Activated T-helper 1 cell treated with anti-CD3 and anti-CD28 coated beads, Interleukin-12 subunit alpha, Interleukin-12 subunit beta, Interleukin-2, Interleukin-4 antibody, amounts not matched to agents 30 ng/mL and 10 ng/mL and 1 ng/mL, durations not matched to agents 14 hours and 24 hours and 36 hours (primary cell): ENCODE measurements at regions of chr2 and their contacts with region 1.

Region 1: GRCh38 chr2:161136696-161137324 is 23.4 kb upstream of the TANK start:
- DNase-seq: peak; percentile 64
- H3K4me3 Mint-ChIP-seq: peak overlapping the region; percentile 94
- H3K27ac Mint-ChIP-seq: peak overlapping the region; percentile 98
- H3K4me1 Mint-ChIP-seq: peaks cover 52% of the 10 kb centered on the region
- H3K27me3 Mint-ChIP-seq: no peaks in the 10 kb centered on the region

Region 2: GRCh38 chr2:160043265-160043664 is 1093.5 kb before region 1 on chr2:
- intact Hi-C with region 1: loop called (anchors 5 kb)
- DNase-seq: no peak
- H3K4me3 Mint-ChIP-seq: no peak overlapping the region
- H3K27ac Mint-ChIP-seq: no peak overlapping the region
- H3K4me1 Mint-ChIP-seq: peaks cover 8% of the 10 kb centered on the region
- H3K27me3 Mint-ChIP-seq: peaks cover 9% of the 10 kb centered on the region

Region 3: GRCh38 chr2:161104054-161104553 is 32.7 kb before region 1 on chr2:
- intact Hi-C with region 1: loop called (anchors 1 kb)
- DNase-seq: no peak
- H3K4me3 Mint-ChIP-seq: peak overlapping the region; percentile 46
- H3K27ac Mint-ChIP-seq: peak overlapping the region; percentile 66
- H3K4me1 Mint-ChIP-seq: peaks cover 40% of the 10 kb centered on the region
- H3K27me3 Mint-ChIP-seq: no peaks in the 10 kb centered on the region

Region 4: DNA sequence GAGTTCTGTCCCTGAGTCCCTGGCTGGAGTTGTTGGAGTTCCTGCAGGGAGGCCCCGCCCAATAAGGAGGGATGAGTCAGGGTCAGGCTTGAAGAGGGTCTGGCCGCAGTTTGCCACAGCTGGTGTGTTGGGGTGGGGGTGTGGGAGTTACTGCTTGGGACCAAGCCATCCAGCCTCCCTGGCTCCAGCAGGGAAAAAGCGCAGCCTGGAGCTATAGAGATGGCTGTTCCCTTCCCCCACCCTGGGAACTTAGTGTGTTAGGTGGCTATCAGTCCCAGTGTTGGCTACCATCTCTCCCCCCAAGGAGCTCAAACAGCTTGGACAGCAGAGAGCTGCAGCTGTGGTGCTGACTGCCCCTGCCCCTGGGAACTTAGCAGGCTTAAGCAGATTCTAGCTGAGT is 10.2 kb after region 1 on chr2:
- intact Hi-C with region 1: loop called (anchors 1 kb)
- DNase-seq: no peak
- H3K4me3 Mint-ChIP-seq: no peak overlapping the region
- H3K27ac Mint-ChIP-seq: peak overlapping the region; percentile 72
- H3K4me1 Mint-ChIP-seq: peaks cover 80% of the 10 kb centered on the region
- H3K27me3 Mint-ChIP-seq: no peaks in the 10 kb centered on the region

Region 5: GRCh38 chr2:161166538-161167409 is 30.0 kb after region 1 on chr2:
- intact Hi-C with region 1: loop called (anchors 1 kb)
- DNase-seq: peak; percentile 74
- H3K4me3 Mint-ChIP-seq: peak overlapping the region; percentile 75
- H3K27ac Mint-ChIP-seq: peak overlapping the region; percentile 94
- H3K4me1 Mint-ChIP-seq: peaks cover 100% of the 10 kb centered on the region
- H3K27me3 Mint-ChIP-seq: no peaks in the 10 kb centered on the region

Region 6: GRCh38 chr2:162073888-162074645 is 937.3 kb after region 1 on chr2 and contains the start of gene DPP4:
- intact Hi-C with region 1: loop called (anchors 10 kb)
- DNase-seq: peak; percentile 42
- H3K4me3 Mint-ChIP-seq: peak within 1 kb of the TSS; percentile 98
- H3K27ac Mint-ChIP-seq: peak within 1 kb of the TSS; percentile 93
- H3K4me1 Mint-ChIP-seq: peaks cover 55% of the 10 kb centered on the region
- H3K27me3 Mint-ChIP-seq: no peaks in the 10 kb centered on the region
- total RNA-seq, gene DPP4: 94.4 and 99.9 TPM in 2 replicates